T-cell (primary cell): ENCODE measurements at regions of chr3 and their contacts with region 1.

Region 1: GRCh38 chr3:122810734-122811133 is 15.9 kb downstream of the SLC49A4 start:
- DNase-seq: no peak
- ATAC-seq: no peak
- H3K4me3 ChIP-seq: no peak overlapping the region
- H3K4me3 Mint-ChIP-seq: no peak overlapping the region
- H3K27ac ChIP-seq: no peak overlapping the region
- H3K27ac Mint-ChIP-seq: no peak overlapping the region
- H3K4me1 ChIP-seq: no peaks in the 10 kb centered on the region
- H3K4me1 Mint-ChIP-seq: no peaks in the 10 kb centered on the region
- H3K27me3 ChIP-seq: no peaks in the 10 kb centered on the region
- H3K27me3 Mint-ChIP-seq: no peaks in the 10 kb centered on the region

Region 2: DNA sequence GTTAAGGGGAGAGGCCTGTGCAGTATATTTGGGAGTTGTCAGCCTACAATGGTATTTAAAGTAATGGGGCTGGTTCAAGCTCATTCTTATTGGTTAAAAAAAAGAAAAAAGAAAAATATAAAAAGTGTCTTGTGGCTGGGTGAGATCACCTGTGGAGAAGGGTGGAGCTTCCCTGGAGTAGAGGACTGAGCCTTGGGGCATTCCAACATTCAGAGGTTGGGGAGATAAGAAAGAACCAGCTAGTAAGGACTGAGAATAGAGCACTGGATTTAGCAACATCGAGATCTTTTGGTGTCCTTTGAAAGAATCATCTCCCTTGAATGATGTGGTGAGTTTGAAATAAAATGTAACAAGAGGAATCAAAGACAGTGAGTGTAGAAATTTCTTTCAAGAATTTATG is 10.7 kb before region 1 on chr3:
- CTCF ChIA-PET with region 1: no interaction called
- POLR2A ChIA-PET with region 1: no interaction called
- DNase-seq: no peak
- ATAC-seq: no peak
- H3K4me3 ChIP-seq: no peak overlapping the region
- H3K4me3 Mint-ChIP-seq: no peak overlapping the region
- H3K27ac ChIP-seq: no peak overlapping the region
- H3K27ac Mint-ChIP-seq: no peak overlapping the region
- H3K4me1 ChIP-seq: peaks cover 12 to 14% of the 10 kb centered on the region in 2 experiments
- H3K4me1 Mint-ChIP-seq: peaks cover 26 to 35% (median 27%) of the 10 kb centered on the region in 3 donors
- H3K27me3 ChIP-seq: no peaks in the 10 kb centered on the region
- H3K27me3 Mint-ChIP-seq: no peaks in the 10 kb centered on the region

Region 3: GRCh38 chr3:122918576-122919290 is 108.0 kb after region 1 on chr3:
- CTCF ChIA-PET with region 1: no interaction called
- POLR2A ChIA-PET with region 1: interaction called in 1 of 2 experiments, 17 read pairs
- DNase-seq: no peak
- ATAC-seq: no peak
- H3K4me3 ChIP-seq: no peak overlapping the region
- H3K4me3 Mint-ChIP-seq: no peak overlapping the region
- H3K27ac ChIP-seq: no peak overlapping the region
- H3K27ac Mint-ChIP-seq: no peak overlapping the region
- H3K4me1 ChIP-seq: peaks cover 0 to 5% of the 10 kb centered on the region in 2 experiments
- H3K4me1 Mint-ChIP-seq: peaks cover 7 to 18% (median 16%) of the 10 kb centered on the region in 3 donors
- H3K27me3 ChIP-seq: peaks cover 2 to 53% of the 10 kb centered on the region in 2 experiments
- H3K27me3 Mint-ChIP-seq: peaks cover 19 to 30% of the 10 kb centered on the region in 2 donors

Region 4: DNA sequence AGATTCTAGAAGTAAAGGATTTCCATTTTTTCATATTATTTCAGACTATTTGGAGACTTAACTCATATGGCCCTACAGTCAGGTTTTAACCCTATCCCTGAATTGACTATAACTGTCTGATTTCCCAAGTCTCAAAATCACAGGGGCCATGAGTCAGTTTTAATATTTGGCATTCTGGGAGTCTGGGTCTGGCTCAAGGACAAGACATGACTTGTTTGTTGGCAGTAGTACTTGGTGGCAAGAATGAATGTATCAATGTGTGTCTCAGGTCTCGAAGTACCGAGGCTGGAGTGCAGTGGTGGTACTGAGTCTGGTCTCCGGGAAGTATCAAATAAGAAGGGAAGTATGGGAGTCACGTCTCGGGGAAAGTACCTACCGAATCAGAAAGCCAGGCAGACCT is 1930.3 kb after region 1 on chr3:
- CTCF ChIA-PET with region 1: no interaction called
- POLR2A ChIA-PET with region 1: no interaction called
- DNase-seq: no peak
- ATAC-seq: no peak
- H3K4me3 ChIP-seq: no peak overlapping the region
- H3K4me3 Mint-ChIP-seq: no peak overlapping the region
- H3K27ac ChIP-seq: no peak overlapping the region
- H3K27ac Mint-ChIP-seq: no peak overlapping the region
- H3K4me1 ChIP-seq: no peaks in the 10 kb centered on the region
- H3K4me1 Mint-ChIP-seq: peaks cover 10 to 15% (median 14%) of the 10 kb centered on the region in 3 donors
- H3K27me3 ChIP-seq: no peaks in the 10 kb centered on the region
- H3K27me3 Mint-ChIP-seq: no peaks in the 10 kb centered on the region